Esophagus muscularis mucosa (tissue), 4 donors: ENCODE measurements at regions of chr1 and their contacts with region 1.

Region 1: GRCh38 chr1:145823565-145824498 is at the starts of genes POLR3C and RNF115:
- DNase-seq: peak; percentile 98
- H3K4me3 ChIP-seq: peak within 1 kb of the TSS; percentile 65 to 89 (median 84)
- H3K27ac ChIP-seq: peak within 1 kb of the TSS; percentile 90 to 95 (median 90)
- H3K4me1 ChIP-seq: peaks cover 8 to 30% (median 27%) of the 10 kb centered on the region in 4 donors
- H3K27me3 ChIP-seq: no peaks in the 10 kb centered on the region
- CTCF ChIP-seq: peak in 1 of 3 experiments; percentile 4
- EP300 ChIP-seq: no peak
- POLR2A ChIP-seq: peak; percentile 69
- total RNA-seq, gene POLR3C: 22.3 to 34.1 (median 27.8) TPM
- total RNA-seq, gene RNF115: 37.8 to 46.3 (median 40.3) TPM

Region 2: DNA sequence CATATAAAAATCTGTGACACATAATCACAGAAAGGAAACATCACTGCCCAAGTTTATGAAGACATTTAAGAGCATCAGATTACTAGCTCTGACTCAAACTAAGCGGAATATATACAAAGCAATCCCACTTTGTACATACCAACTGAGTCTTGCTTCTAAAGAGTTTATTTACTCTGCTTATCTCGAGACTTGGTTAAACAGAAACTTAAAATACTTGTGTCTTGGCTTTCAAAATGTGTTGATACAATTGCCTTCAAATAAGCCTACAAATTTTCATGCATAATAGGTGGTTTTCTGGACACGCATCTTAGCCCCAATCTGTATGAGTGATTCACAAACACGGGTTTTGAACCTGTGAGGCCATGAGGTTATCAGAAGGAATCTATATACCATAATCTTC is 83.6 kb before region 1 on chr1:
- intact Hi-C with region 1: no loop called
- DNase-seq: no peak
- H3K4me3 ChIP-seq: no peak overlapping the region
- H3K27ac ChIP-seq: no peak overlapping the region
- H3K4me1 ChIP-seq: no peaks in the 10 kb centered on the region
- H3K27me3 ChIP-seq: no peaks in the 10 kb centered on the region
- CTCF ChIP-seq: no peak
- EP300 ChIP-seq: no peak
- POLR2A ChIP-seq: no peak

Region 3: GRCh38 chr1:145751491-145752037 is 72.3 kb before region 1 on chr1:
- intact Hi-C with region 1: loop called (anchors 10 kb)
- DNase-seq: no peak
- H3K4me3 ChIP-seq: no peak overlapping the region
- H3K27ac ChIP-seq: peak overlapping the region; percentile 3 to 46 (median 34)
- H3K4me1 ChIP-seq: peaks cover 0 to 39% (median 24%) of the 10 kb centered on the region in 4 donors
- H3K27me3 ChIP-seq: no peaks in the 10 kb centered on the region
- CTCF ChIP-seq: no peak
- EP300 ChIP-seq: no peak
- POLR2A ChIP-seq: no peak

Region 4: GRCh38 chr1:145785547-145785946 is 38.3 kb before region 1 on chr1:
- intact Hi-C with region 1: loop called (anchors 5 kb)
- DNase-seq: no peak
- H3K4me3 ChIP-seq: no peak overlapping the region
- H3K27ac ChIP-seq: peak overlapping the region; percentile 81 to 84 (median 82)
- H3K4me1 ChIP-seq: peaks cover 15 to 32% (median 30%) of the 10 kb centered on the region in 4 donors
- H3K27me3 ChIP-seq: no peaks in the 10 kb centered on the region
- CTCF ChIP-seq: no peak
- EP300 ChIP-seq: no peak
- POLR2A ChIP-seq: no peak

Region 5: DNA sequence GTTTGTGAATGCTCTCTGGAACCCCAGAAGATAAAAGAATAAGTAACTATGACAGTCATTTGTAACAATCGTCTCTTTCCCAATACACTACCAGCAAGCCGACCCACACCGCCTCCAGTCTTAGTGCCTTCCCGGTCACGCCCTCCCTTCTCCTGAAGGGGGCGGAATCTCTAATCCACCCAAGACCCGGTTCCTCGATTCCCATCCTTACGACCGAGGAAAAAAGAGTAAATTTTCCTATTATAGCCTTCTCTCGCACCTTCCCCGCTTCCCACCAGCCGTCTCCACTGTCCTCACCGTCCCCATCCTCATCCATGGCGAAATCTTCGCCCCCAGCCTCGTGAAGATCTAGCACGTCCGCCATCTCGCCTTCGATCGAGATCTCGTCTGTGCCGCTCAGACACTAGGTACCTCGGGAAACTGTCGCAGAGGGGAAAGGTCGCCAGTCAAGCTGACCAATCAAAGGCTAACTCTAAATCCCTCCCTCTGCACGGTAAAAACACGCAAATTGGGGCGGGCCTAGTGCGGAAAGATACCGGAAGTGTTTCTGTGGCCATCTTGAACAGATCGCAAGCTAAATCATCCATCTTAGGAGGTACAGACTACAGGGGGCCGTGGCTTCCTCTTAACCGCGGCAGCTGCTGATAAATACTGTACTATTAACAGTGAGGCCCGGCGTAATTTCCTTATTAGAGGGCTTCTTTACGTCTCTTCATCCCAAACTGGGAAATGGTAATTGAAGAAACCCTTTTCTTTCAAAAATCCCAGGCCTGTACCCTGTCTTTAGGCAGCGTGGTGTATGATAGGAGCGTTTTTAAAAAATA is 103.4 kb after region 1 on chr1 and contains the start of gene RBM8A:
- intact Hi-C with region 1: no loop called
- DNase-seq: peak; percentile 99
- H3K4me3 ChIP-seq: peak within 1 kb of the TSS; percentile 71 to 85 (median 77)
- H3K27ac ChIP-seq: peak within 1 kb of the TSS; percentile 87 to 96 (median 94)
- H3K4me1 ChIP-seq: peaks cover 10 to 25% (median 23%) of the 10 kb centered on the region in 4 donors
- H3K27me3 ChIP-seq: no peaks in the 10 kb centered on the region
- CTCF ChIP-seq: peak; percentile 67 to 81 (median 69)
- EP300 ChIP-seq: no peak
- POLR2A ChIP-seq: peak; percentile 97
- total RNA-seq, gene RBM8A: 42.8 to 119 (median 69.7) TPM